CD4-positive, alpha-beta memory T cell (primary cell): ENCODE measurements at regions of chr1 and their contacts with region 1.

Region 1: DNA sequence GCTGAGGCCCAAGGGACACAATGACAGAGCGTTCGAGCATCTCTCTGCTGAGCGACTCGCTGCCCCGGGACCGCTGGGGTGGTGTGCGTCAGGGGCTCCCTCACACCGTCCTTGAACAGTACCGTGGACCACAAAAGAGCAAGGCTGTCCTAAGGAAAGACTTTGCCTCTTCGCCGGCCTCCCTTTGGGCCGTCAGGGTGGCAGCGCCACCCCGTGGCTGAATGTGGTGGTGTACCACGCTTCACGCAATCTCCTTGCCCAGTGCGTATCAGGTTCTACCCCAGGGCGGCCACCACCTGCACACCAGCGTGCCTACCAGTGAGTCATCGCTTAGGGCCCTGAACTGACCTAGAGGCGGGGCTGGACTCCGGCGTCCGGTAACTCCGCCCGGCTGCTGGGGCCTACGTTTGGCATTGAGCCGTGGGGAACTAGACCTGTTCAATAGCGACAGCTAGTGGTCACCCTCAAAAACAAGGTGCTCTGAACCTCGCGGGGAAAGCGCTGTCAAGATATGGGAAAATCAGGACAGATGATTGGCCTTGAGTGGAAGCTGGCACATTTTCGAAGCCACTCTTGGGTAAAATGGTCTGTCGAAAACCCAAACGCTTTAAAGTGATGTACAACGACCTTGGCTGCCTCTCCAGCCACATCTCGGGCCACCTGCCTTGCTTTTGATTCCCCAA is 8.1 kb upstream of the TRAF3IP3 start:
- DNase-seq: peak; percentile 80 to 88 (median 83)
- H3K4me3 ChIP-seq: peak overlapping the region; percentile 17 to 67
- H3K4me3 Mint-ChIP-seq: peak overlapping the region; percentile 89 to 96 (median 92)
- H3K27ac ChIP-seq: peak overlapping the region; percentile 64
- H3K27ac Mint-ChIP-seq: peak overlapping the region; percentile 75 to 99 (median 97)
- H3K4me1 ChIP-seq: peaks cover 58% of the 10 kb centered on the region
- H3K4me1 Mint-ChIP-seq: peaks cover 41 to 69% (median 54%) of the 10 kb centered on the region in 4 donors
- H3K27me3 ChIP-seq: no peaks in the 10 kb centered on the region
- H3K27me3 Mint-ChIP-seq: no peaks in the 10 kb centered on the region

Region 2: GRCh38 chr1:209565759-209566678 is 181.7 kb before region 1 on chr1:
- CTCF ChIA-PET with region 1: interaction called, 23 read pairs
- POLR2A ChIA-PET with region 1: interaction called, 3 read pairs
- intact Hi-C with region 1: loop called (anchors 1 kb)
- DNase-seq: peak; percentile 64 to 78 (median 67)
- H3K4me3 ChIP-seq: no peak overlapping the region
- H3K4me3 Mint-ChIP-seq: no peak overlapping the region
- H3K27ac ChIP-seq: no peak overlapping the region
- H3K27ac Mint-ChIP-seq: peak overlapping the region in 1 of 7 donors; percentile 45
- H3K4me1 ChIP-seq: peaks cover 6% of the 10 kb centered on the region
- H3K4me1 Mint-ChIP-seq: peaks cover 6 to 7% (median 6%) of the 10 kb centered on the region in 4 donors
- H3K27me3 ChIP-seq: peaks cover 9% of the 10 kb centered on the region
- H3K27me3 Mint-ChIP-seq: peaks cover 17 to 40% of the 10 kb centered on the region in 2 donors

Region 3: DNA sequence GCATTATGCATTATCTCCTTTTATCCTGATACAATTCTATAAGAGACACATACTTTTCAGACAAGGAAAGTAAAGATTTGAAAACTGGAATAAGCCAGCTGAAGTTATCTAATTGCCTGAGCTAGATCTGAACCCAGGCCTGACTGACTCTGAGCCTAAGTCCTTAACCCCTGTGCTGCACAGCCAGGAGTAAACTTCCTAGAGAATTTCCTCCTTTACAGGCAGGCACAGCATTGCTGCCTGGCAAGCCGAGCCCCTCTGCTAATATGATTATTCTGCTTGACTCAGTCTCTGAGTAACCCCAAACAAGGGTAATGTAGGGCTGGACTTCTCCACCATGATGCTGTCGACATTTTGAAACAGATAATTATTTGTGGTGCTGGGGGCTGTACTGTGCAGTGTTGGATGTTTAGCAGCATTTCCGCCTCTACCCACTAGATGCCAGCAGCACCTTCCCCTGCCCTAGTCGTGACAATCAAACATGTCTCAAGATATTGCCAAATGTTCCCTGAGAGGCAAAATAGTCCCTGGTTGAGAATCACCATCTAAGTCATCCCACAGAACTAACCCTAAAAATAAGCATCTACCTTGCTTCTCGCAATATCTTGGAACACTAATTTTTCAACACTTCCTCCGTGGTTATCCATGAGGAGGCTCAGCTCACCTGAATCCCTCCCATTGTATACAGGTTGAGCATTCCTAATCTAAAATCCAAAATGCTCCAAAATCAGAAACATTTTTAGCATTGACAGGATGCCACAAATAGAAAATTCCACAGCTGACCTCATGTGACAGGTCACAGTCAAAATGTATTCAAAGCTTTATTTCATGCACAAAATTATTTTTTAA is 145.7 kb before region 1 on chr1:
- CTCF ChIA-PET with region 1: interaction called, 3 read pairs
- POLR2A ChIA-PET with region 1: no interaction called
- intact Hi-C with region 1: loop called (anchors 10 kb)
- DNase-seq: peak in 4 of 5 donors; percentile 18 to 35 (median 30)
- H3K4me3 ChIP-seq: no peak overlapping the region
- H3K4me3 Mint-ChIP-seq: no peak overlapping the region
- H3K27ac ChIP-seq: no peak overlapping the region
- H3K27ac Mint-ChIP-seq: no peak overlapping the region
- H3K4me1 ChIP-seq: no peaks in the 10 kb centered on the region
- H3K4me1 Mint-ChIP-seq: peaks cover 0 to 2% (median under 1%) of the 10 kb centered on the region in 4 donors
- H3K27me3 ChIP-seq: no peaks in the 10 kb centered on the region
- H3K27me3 Mint-ChIP-seq: peaks cover 1 to 9% of the 10 kb centered on the region in 2 donors

Region 4: DNA sequence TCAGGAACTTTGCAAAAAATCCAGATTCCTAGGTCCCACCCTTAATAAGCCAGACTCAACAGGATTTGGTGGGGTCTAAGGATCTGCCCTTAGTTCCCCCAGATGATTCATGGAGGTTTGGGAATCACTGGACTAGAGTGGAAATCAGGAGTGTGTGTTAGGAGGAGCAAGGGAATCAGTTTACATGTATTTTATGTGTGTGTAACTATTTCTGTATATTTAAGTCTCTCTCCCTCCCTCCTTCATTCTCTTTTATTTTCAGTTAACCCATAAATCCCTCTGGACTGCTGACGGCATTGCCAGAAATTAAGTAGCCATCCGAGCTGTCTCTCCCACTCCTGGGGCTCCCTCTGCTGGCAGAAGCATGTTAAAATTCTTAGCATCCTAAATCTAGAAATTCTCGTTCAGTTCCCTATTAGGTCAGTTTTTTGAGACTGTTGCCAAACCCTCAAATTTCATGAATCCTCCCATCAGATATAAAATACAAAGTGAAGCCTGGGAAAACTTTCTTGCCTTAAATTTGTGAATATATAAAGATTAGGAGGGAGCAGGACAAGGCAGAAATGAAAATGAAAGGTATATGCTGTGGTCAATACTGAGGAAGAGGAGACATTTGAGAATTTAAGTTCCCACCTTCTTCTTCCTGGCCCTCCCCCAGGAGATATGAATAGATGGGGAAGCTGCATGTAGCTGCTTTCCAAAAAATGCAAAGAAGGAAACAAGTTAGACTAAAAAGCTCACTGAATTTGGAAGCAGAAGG is 54.8 kb before region 1 on chr1:
- CTCF ChIA-PET with region 1: interaction called, 18 read pairs
- POLR2A ChIA-PET with region 1: interaction called, 3 read pairs
- intact Hi-C with region 1: loop called (anchors 1 kb)
- DNase-seq: peak; percentile 60 to 68 (median 62)
- H3K4me3 ChIP-seq: no peak overlapping the region
- H3K4me3 Mint-ChIP-seq: peak overlapping the region in 1 of 8 donors; percentile 9
- H3K27ac ChIP-seq: no peak overlapping the region
- H3K27ac Mint-ChIP-seq: peak overlapping the region in 3 of 7 donors; percentile 43 to 66 (median 57)
- H3K4me1 ChIP-seq: peaks cover 15% of the 10 kb centered on the region
- H3K4me1 Mint-ChIP-seq: peaks cover 18 to 25% (median 22%) of the 10 kb centered on the region in 4 donors
- H3K27me3 ChIP-seq: no peaks in the 10 kb centered on the region
- H3K27me3 Mint-ChIP-seq: peaks cover 0 to 2% of the 10 kb centered on the region in 2 donors

Region 5: DNA sequence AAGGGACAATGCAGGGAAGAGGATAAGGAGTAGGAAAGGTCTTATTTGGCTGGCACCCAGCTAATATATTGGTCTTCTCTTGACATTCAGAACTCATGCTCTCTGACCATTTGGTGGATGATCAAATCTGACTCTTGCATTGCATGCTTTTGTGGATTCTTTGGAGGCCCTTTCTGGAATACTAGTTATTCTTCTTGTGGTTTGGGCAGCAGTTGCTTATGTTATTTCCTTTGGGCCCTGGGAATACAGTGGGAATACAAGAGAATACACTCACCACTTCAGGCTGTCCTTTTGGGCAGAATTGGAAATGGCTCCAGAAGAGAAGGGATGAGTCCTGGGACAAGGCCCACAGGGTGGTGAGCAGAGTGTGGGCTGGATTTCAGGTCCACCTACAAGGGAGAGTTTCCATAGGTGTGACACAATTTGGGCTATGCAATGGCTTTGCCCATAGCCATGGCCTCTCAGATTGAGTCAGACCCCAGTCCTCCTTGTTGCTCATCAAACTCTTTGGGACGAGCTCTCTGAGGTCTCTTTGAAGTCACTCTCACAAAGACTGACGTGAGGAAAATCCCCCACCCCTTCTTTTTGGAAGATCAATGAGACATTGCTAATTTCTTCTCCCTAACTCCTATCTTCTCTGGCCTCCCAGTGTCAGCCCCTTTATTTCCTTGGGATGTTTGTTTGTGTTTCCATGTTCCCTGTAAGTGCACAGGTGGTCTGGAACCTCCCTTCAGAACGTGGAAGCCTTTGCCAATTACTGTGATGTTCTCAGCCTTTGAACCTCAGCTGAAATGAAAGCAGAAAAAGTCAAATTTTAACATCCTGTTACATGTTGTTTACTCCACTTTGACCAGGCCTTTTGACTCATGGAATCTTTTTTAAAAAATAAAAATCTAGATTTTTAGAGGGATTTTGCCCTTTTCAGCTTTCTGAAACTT is 23.7 kb before region 1 on chr1:
- CTCF ChIA-PET with region 1: interaction called, 18 read pairs
- POLR2A ChIA-PET with region 1: no interaction called
- intact Hi-C with region 1: no loop called
- DNase-seq: peak in 1 of 5 donors; percentile 5
- H3K4me3 ChIP-seq: no peak overlapping the region
- H3K4me3 Mint-ChIP-seq: peak overlapping the region in 4 of 8 donors; percentile 21 to 72 (median 44)
- H3K27ac ChIP-seq: no peak overlapping the region
- H3K27ac Mint-ChIP-seq: peak overlapping the region in 5 of 7 donors; percentile 36 to 91 (median 88)
- H3K4me1 ChIP-seq: peaks cover 19% of the 10 kb centered on the region
- H3K4me1 Mint-ChIP-seq: peaks cover 11 to 22% (median 14%) of the 10 kb centered on the region in 4 donors
- H3K27me3 ChIP-seq: no peaks in the 10 kb centered on the region
- H3K27me3 Mint-ChIP-seq: no peaks in the 10 kb centered on the region

Region 6: GRCh38 chr1:209769171-209769904 is 21.6 kb after region 1 on chr1:
- CTCF ChIA-PET with region 1: interaction called, 385 read pairs
- POLR2A ChIA-PET with region 1: interaction called, 1,778 read pairs
- intact Hi-C with region 1: loop called (anchors 1 kb)
- DNase-seq: peak; percentile 74 to 88 (median 78)
- H3K4me3 ChIP-seq: peak overlapping the region; percentile 83 to 84
- H3K4me3 Mint-ChIP-seq: no peak overlapping the region
- H3K27ac ChIP-seq: peak overlapping the region; percentile 79
- H3K27ac Mint-ChIP-seq: no peak overlapping the region
- H3K4me1 ChIP-seq: peaks cover 69% of the 10 kb centered on the region
- H3K4me1 Mint-ChIP-seq: peaks cover 1 to 31% (median 23%) of the 10 kb centered on the region in 4 donors
- H3K27me3 ChIP-seq: no peaks in the 10 kb centered on the region
- H3K27me3 Mint-ChIP-seq: no peaks in the 10 kb centered on the region

Region 7: GRCh38 chr1:209784265-209785169 is 36.8 kb after region 1 on chr1 and contains the start of gene C1orf74:
- CTCF ChIA-PET with region 1: interaction called, 18 read pairs
- POLR2A ChIA-PET with region 1: interaction called, 1,778 read pairs
- intact Hi-C with region 1: loop called (anchors 5 kb)
- DNase-seq: peak; percentile 97 to 99 (median 98)
- H3K4me3 ChIP-seq: peak within 1 kb of the TSS; percentile 49 to 72
- H3K4me3 Mint-ChIP-seq: peak within 1 kb of the TSS; percentile 92 to 99 (median 96)
- H3K27ac ChIP-seq: peak within 1 kb of the TSS; percentile 67
- H3K27ac Mint-ChIP-seq: peak within 1 kb of the TSS; percentile 95 to 100 (median 99)
- H3K4me1 ChIP-seq: peaks cover 21% of the 10 kb centered on the region
- H3K4me1 Mint-ChIP-seq: peaks cover 15 to 35% (median 33%) of the 10 kb centered on the region in 4 donors
- H3K27me3 ChIP-seq: no peaks in the 10 kb centered on the region
- H3K27me3 Mint-ChIP-seq: peaks cover 0 to 3% of the 10 kb centered on the region in 2 donors
- total RNA-seq, gene C1orf74: 1.2 TPM